ENCODE measurements at regions of chr2 and their contacts with region 1.

Region 1: DNA sequence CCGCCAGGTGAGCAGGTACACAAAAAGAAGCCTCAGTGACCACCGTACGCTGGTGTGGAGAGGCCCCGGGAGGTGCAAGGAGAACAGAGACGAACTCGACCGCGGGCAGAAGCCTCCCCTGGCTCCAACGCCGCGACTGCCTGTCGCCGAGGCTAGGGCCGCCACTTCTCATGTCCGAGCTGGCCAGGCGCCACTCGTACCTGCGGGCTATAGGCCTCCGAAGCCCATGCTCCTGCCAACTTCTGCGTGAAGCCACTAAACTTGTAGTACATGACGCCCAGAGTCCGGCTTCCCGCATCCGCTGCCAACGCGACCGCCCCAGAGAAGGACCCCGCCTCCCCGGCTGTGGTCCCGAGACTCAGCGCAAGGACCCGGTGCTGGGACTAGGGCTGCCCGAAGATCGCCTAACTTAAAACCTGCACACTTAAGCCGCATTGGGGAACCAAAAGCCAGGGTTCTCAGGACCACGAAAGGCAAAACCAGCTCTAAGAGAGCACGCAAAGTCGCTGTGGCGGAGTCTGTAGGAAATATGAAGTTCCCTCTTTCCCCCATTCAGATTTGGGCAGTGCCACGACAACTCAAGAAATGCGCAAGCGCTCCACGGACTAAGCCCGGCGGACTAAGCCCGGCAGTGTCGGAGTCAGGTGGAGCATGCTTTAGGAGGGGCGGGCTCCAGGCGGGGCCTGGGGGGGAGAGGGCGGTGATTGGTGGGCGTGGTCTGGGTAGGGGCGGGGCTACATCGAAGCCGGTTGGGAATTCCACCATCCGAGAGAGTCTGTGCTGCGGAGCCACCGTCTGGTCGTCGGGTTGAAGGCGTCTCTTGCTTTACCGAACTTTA is at the start of gene COX7A2L:
- DNase-seq: peak; percentile 94 to 99 (median 98)

Region 2: DNA sequence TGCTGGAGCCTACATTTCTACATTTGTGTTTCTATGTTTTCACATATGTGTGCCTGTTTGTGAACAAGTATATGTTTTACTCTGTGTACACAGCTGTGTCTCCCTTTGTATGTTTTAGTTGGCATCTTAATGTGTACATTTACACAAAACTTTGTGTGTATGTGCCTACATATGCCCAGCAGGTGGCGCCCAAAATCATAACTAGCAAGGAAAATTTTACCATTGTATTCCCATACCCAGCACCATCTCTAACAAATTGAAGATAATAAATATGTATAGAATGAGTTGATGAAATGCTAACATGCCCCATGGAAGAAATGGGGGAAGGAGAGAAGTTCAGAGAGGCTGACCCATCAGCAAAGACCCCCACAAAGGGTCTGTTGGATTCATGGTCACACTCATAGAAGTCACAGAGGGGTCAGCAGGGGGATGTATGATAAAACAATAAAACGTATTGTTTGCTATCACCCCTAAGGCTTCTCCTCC is 265.1 kb before region 1 on chr2:
- intact Hi-C with region 1: loop called (anchors 10 kb)
- DNase-seq: peak; percentile 37 to 93 (median 80)

Measured in head of caudate nucleus (tissue), 42 donors.